ENCODE measurements at regions of chr11 and their contacts with region 1.

Region 1: GRCh38 chr11:17839973-17840611 is 105.5 kb downstream of the KCNC1 start:
- DNase-seq: no peak
- ATAC-seq: no peak
- H3K4me3 ChIP-seq: no peak overlapping the region
- H3K27ac ChIP-seq: no peak overlapping the region
- H3K4me1 ChIP-seq: no peaks in the 10 kb centered on the region
- CTCF ChIP-seq: no peak
- EP300 ChIP-seq: no peak
- POLR2A ChIP-seq: no peak
- RAD21 ChIP-seq: no peak

Region 2: DNA sequence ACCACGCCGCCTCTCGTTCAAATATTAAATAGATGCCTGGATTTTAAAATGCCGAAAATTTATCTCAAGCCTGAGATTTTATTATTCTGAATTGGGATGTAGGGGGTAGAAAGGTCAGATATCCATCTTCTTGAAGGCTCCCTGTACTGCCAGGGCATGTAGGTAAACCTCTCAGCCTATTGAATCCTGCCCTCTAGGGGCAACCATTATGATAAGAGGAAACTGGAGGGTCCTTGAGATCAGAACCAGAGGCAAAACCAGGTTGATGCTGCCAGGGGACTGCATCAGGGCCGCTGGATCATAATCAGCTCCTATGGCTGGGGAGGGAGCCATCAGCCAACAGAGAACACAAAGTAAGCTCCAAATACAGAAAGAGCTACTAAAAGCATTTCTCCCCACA is 13.1 kb before region 1 on chr11:
- CTCF ChIA-PET with region 1: interaction called, 11 read pairs
- POLR2A ChIA-PET with region 1: no interaction called
- DNase-seq: peak; percentile 11 to 12
- ATAC-seq: peak; percentile 54 to 72; a peak in 4 of 6 replicates
- H3K4me3 ChIP-seq: no peak overlapping the region
- H3K27ac ChIP-seq: no peak overlapping the region
- H3K4me1 ChIP-seq: no peaks in the 10 kb centered on the region
- CTCF ChIP-seq: peak; percentile 26; the same call in 1 of the 3 replicates
- EP300 ChIP-seq: no peak
- POLR2A ChIP-seq: no peak
- RAD21 ChIP-seq: 0 out of 5 replicates have a peak, but pooled peaks have one; percentile 13 to 21

Measured in A549 (cell line).